Dendritic cell treated with granulocyte-macrophage colony-stimulating factor and Interleukin-4, amounts not matched to agents 40 ng/mL and 50 ng/mL, for 4 days (primary cell): ENCODE measurements at regions of chr13 and their contacts with region 1.

Region 1: DNA sequence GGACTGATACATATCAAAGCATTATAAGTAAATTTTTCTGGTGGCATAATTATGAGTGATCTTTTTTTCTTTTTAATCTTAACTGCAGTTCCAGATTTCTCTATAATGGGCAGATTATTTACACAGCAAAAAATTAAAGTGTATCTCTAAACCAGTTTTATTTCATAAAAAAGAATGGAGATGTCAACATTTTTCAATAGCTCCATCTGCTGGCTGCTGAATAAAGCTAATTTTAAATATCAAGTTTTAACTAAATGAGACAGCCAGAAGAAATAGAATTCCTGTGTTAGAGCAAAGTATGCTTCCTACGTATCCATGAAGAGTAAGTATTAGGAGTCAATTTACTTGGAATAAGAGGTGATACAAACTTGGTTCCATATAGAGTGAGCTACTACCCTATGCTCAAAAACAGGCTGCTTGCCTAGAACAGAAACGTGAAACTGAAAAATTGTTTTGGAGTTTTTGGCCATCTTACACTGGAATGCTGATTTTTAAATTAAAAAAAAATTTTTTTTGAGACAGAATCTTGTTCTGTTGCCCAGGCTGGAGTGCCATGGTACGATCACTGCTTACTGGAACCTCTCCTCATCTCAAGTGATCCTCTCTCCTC is 5.0 kb upstream of the PDS5B start:
- H3K4me3 Mint-ChIP-seq: no peak overlapping the region
- H3K27ac Mint-ChIP-seq: no peak overlapping the region
- H3K4me1 Mint-ChIP-seq: peaks cover 7% of the 10 kb centered on the region
- H3K27me3 Mint-ChIP-seq: peaks cover 8% of the 10 kb centered on the region

Region 2: GRCh38 chr13:32246468-32246867 is 334.8 kb before region 1 on chr13:
- intact Hi-C with region 1: loop called (anchors 5 kb)
- H3K4me3 Mint-ChIP-seq: no peak overlapping the region
- H3K27ac Mint-ChIP-seq: peak overlapping the region; percentile 45
- H3K4me1 Mint-ChIP-seq: peaks cover 8% of the 10 kb centered on the region
- H3K27me3 Mint-ChIP-seq: no peaks in the 10 kb centered on the region

Region 3: GRCh38 chr13:32381539-32381938 is 199.7 kb before region 1 on chr13:
- intact Hi-C with region 1: loop called (anchors 2 kb)
- H3K4me3 Mint-ChIP-seq: no peak overlapping the region
- H3K27ac Mint-ChIP-seq: no peak overlapping the region
- H3K4me1 Mint-ChIP-seq: no peaks in the 10 kb centered on the region
- H3K27me3 Mint-ChIP-seq: no peaks in the 10 kb centered on the region

Region 4: GRCh38 chr13:32472194-32472621 is 109.1 kb before region 1 on chr13:
- intact Hi-C with region 1: loop called (anchors 2 kb)
- H3K4me3 Mint-ChIP-seq: no peak overlapping the region
- H3K27ac Mint-ChIP-seq: peak overlapping the region; percentile 86
- H3K4me1 Mint-ChIP-seq: peaks cover 21% of the 10 kb centered on the region
- H3K27me3 Mint-ChIP-seq: no peaks in the 10 kb centered on the region

Region 5: GRCh38 chr13:32538621-32539246 is 42.5 kb before region 1 on chr13 and contains the start of gene N4BP2L2:
- intact Hi-C with region 1: loop called (anchors 5 kb)
- H3K4me3 Mint-ChIP-seq: peak within 1 kb of the TSS; percentile 94
- H3K27ac Mint-ChIP-seq: peak within 1 kb of the TSS; percentile 98
- H3K4me1 Mint-ChIP-seq: peaks cover 40% of the 10 kb centered on the region
- H3K27me3 Mint-ChIP-seq: no peaks in the 10 kb centered on the region